A673 (cell line): ENCODE measurements at regions of chr16 and their contacts with region 1.

Region 1: GRCh38 chr16:10181196-10182162 is 749 bp downstream of the GRIN2A start:
- DNase-seq: peak; percentile 75
- H3K4me3 ChIP-seq: peak overlapping the region; percentile 34
- H3K27ac ChIP-seq: no peak overlapping the region
- H3K4me1 ChIP-seq: peaks cover 4% of the 10 kb centered on the region
- H3K27me3 ChIP-seq: peaks cover 40% of the 10 kb centered on the region
- CTCF ChIP-seq: peak; percentile 90

Region 2: GRCh38 chr16:8567750-8568617 is 1613.5 kb before region 1 on chr16:
- CTCF ChIA-PET with region 1: no interaction called
- POLR2A ChIA-PET with region 1: no interaction called
- intact Hi-C with region 1: loop called (anchors 5 kb)
- DNase-seq: peak; percentile 98
- H3K4me3 ChIP-seq: no peak overlapping the region
- H3K27ac ChIP-seq: peak overlapping the region; percentile 100
- H3K4me1 ChIP-seq: peaks cover 43% of the 10 kb centered on the region
- H3K27me3 ChIP-seq: no peaks in the 10 kb centered on the region
- CTCF ChIP-seq: peak; percentile 99

Region 3: GRCh38 chr16:9134739-9135138 is 1046.7 kb before region 1 on chr16:
- CTCF ChIA-PET with region 1: interaction called, 4 read pairs
- POLR2A ChIA-PET with region 1: no interaction called
- intact Hi-C with region 1: loop called (anchors 5 kb)
- DNase-seq: peak; percentile 68
- H3K4me3 ChIP-seq: no peak overlapping the region
- H3K27ac ChIP-seq: no peak overlapping the region
- H3K4me1 ChIP-seq: no peaks in the 10 kb centered on the region
- H3K27me3 ChIP-seq: no peaks in the 10 kb centered on the region
- CTCF ChIP-seq: peak; percentile 74

Region 4: DNA sequence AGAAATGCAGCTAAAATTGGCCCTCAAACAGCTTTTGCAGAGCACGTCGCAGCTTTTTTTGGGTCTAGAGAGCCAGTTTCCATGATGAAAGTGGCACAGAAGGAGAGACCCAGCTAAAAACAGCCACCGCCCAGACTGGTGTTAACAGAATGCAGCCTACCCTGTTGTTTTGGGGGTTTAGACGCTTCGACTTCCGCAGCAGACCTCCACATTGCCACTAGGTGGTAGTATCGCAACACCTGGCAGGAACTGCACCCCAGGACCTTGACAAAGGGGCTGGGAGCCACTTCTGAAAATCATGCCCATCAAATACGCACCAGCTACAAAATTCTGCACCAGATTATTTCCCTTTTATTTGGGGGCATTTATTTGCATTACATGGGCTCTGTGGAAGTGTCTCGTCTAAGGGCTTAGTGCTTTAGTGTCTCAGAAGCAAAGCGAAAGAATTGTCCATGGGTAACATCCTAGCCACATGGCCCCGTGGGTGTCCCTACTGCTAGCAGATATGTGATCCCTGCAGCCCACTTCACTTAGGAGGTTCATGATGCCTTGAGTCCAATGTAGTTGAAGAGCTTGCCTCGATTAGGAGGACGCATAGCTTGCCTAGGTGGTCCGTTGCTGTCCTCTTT is 922.9 kb before region 1 on chr16:
- CTCF ChIA-PET with region 1: interaction called, 4 read pairs
- POLR2A ChIA-PET with region 1: no interaction called
- intact Hi-C with region 1: loop called (anchors 5 kb)
- DNase-seq: peak; percentile 68
- H3K4me3 ChIP-seq: no peak overlapping the region
- H3K27ac ChIP-seq: no peak overlapping the region
- H3K4me1 ChIP-seq: no peaks in the 10 kb centered on the region
- H3K27me3 ChIP-seq: no peaks in the 10 kb centered on the region
- CTCF ChIP-seq: peak; percentile 85

Region 5: DNA sequence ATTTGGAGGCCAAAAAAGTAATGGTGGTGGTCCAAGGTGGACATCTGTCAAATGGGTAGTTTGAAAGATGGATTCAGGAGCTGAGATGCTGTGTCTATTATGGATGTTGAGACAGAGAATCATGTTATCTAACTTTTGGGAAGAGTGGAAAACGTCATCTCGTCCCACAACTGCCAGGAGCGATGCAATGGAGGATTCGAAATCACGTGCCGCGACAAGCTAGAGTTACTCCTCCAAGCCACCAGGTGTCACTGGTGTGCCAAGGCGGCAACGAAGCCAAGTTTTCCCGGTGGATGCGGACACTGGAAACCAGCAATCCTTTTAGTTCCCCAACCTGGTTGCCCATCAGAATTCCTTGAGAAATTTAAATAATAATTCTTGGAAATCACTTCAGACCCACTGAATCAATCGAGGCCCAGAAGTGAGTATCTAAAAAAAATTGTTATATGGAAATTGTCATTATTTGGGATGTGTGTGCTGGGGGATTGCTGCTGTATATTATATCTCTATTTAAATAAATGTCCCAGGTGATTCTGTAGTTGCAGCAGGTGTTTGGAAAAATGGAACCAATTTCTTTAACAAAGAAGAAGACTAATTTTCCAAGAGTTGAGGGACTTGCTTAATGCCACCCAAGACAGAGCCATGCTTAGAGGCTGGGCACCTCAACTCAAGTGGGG is 883.9 kb before region 1 on chr16:
- CTCF ChIA-PET with region 1: no interaction called
- POLR2A ChIA-PET with region 1: no interaction called
- intact Hi-C with region 1: loop called (anchors 5 kb)
- DNase-seq: peak; percentile 76
- H3K4me3 ChIP-seq: no peak overlapping the region
- H3K27ac ChIP-seq: no peak overlapping the region
- H3K4me1 ChIP-seq: no peaks in the 10 kb centered on the region
- H3K27me3 ChIP-seq: no peaks in the 10 kb centered on the region
- CTCF ChIP-seq: peak; percentile 83

Region 6: GRCh38 chr16:9647981-9648712 is 533.3 kb before region 1 on chr16:
- CTCF ChIA-PET with region 1: interaction called, 5 read pairs
- POLR2A ChIA-PET with region 1: no interaction called
- intact Hi-C with region 1: loop called (anchors 5 kb)
- DNase-seq: peak; percentile 42
- H3K4me3 ChIP-seq: no peak overlapping the region
- H3K27ac ChIP-seq: no peak overlapping the region
- H3K4me1 ChIP-seq: no peaks in the 10 kb centered on the region
- H3K27me3 ChIP-seq: no peaks in the 10 kb centered on the region
- CTCF ChIP-seq: peak; percentile 78

Region 7: DNA sequence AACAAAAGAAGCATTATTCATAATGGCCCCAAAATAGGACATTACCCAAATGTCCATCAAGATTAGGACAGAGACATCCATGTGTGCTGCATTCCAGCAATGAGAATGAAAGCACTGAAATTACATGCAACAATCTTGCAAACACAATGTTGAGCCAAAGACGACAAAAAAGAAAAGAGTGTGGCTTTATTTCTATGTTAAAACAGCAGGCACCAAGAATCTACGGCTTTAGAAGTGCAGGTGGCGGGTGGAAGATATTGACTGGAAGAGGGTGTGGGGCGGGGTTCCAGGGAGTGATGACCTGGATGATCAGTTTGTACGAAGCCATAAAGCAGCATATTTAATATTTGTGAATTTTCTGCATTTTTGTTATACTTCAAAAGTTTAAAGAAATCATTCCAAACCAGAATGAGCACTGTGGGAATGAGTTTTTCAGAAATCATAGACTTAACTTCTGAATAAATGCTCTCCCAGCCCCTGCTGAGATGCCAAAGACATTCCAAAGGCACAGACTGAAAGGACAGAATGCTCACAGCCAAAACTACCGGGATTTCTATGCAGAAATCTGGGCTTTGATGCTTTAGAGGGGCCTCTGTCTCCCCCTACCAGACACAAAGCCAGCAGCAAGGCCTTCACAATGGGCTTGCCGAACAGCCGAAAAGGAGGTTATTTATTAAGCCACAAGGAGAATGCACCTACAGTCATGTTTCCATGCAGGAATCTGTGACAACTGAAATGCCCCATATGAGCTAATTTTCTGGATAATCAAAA is 360.8 kb before region 1 on chr16:
- CTCF ChIA-PET with region 1: no interaction called
- POLR2A ChIA-PET with region 1: no interaction called
- intact Hi-C with region 1: no loop called
- DNase-seq: no peak
- H3K4me3 ChIP-seq: no peak overlapping the region
- H3K27ac ChIP-seq: no peak overlapping the region
- H3K4me1 ChIP-seq: no peaks in the 10 kb centered on the region
- H3K27me3 ChIP-seq: no peaks in the 10 kb centered on the region
- CTCF ChIP-seq: no peak

Region 8: GRCh38 chr16:10162981-10163380 is 18.5 kb before region 1 on chr16:
- CTCF ChIA-PET with region 1: no interaction called
- POLR2A ChIA-PET with region 1: no interaction called
- intact Hi-C with region 1: no loop called
- DNase-seq: no peak
- H3K4me3 ChIP-seq: no peak overlapping the region
- H3K27ac ChIP-seq: no peak overlapping the region
- H3K4me1 ChIP-seq: no peaks in the 10 kb centered on the region
- H3K27me3 ChIP-seq: peaks cover 23% of the 10 kb centered on the region
- CTCF ChIP-seq: no peak